Posterior vena cava (tissue), 2 donors: ENCODE measurements at regions of chr14 and their contacts with region 1.

Region 1: GRCh38 chr14:85702997-85703396 is 173.1 kb downstream of the FLRT2 start:
- DNase-seq: no peak

Region 2: DNA sequence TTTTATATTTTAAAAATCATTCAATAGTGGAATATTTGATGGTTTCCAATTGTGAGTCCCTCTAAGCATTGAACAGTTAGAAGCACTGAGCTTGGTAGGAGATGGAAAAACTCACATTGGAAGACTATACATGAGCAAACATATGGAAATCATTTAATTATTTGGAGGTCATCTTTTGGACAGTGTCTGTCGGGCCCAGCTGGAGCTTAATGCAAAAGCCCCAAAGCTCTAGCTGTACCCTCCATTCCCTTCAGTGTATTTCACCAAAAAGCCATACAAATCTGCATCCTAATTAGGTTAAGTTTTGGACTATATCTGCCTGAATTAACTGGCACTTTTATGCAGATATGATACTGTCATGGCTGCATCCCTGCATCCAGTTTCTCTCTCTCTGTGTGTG is 192.6 kb after region 1 on chr14:
- intact Hi-C with region 1: no loop called
- DNase-seq: no peak

Region 3: DNA sequence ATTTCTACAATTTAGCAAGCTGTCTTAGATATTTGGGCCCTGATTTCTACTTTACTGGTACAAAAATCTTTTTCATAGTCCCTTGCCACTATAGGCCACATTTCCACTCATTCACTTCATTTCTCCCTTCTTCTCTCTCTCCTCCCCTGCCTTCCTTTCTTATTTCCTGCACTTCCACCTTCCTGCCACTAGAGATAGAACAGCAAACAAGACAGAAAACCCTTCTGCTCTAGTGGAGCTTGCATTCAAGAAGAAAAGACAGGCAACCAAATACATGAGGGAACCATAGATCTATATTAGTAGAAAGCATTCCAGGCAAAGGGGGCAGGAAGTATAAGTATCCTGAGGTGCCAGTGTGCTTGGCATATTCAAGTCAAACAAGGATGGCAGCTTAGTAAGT is 450.5 kb after region 1 on chr14:
- intact Hi-C with region 1: loop called in 1 of 2 experiments (anchors 5 kb)
- DNase-seq: no peak